ENCODE measurements at regions of chr15 and their contacts with region 1.

Region 1: GRCh38 chr15:67303490-67304363 is 49.1 kb downstream of the IQCH start:
- DNase-seq: no peak
- H3K4me3 Mint-ChIP-seq: no peak overlapping the region
- H3K27ac Mint-ChIP-seq: no peak overlapping the region
- H3K4me1 Mint-ChIP-seq: peaks cover 14% of the 10 kb centered on the region
- H3K27me3 Mint-ChIP-seq: peaks cover 6% of the 10 kb centered on the region

Region 2: GRCh38 chr15:66841953-66842681 is 461.6 kb before region 1 on chr15:
- CTCF ChIA-PET with region 1: no interaction called
- POLR2A ChIA-PET with region 1: no interaction called
- intact Hi-C with region 1: no loop called
- DNase-seq: peak; percentile 31
- H3K4me3 Mint-ChIP-seq: no peak overlapping the region
- H3K27ac Mint-ChIP-seq: no peak overlapping the region
- H3K4me1 Mint-ChIP-seq: peaks cover 2% of the 10 kb centered on the region
- H3K27me3 Mint-ChIP-seq: peaks cover 32% of the 10 kb centered on the region

Region 3: DNA sequence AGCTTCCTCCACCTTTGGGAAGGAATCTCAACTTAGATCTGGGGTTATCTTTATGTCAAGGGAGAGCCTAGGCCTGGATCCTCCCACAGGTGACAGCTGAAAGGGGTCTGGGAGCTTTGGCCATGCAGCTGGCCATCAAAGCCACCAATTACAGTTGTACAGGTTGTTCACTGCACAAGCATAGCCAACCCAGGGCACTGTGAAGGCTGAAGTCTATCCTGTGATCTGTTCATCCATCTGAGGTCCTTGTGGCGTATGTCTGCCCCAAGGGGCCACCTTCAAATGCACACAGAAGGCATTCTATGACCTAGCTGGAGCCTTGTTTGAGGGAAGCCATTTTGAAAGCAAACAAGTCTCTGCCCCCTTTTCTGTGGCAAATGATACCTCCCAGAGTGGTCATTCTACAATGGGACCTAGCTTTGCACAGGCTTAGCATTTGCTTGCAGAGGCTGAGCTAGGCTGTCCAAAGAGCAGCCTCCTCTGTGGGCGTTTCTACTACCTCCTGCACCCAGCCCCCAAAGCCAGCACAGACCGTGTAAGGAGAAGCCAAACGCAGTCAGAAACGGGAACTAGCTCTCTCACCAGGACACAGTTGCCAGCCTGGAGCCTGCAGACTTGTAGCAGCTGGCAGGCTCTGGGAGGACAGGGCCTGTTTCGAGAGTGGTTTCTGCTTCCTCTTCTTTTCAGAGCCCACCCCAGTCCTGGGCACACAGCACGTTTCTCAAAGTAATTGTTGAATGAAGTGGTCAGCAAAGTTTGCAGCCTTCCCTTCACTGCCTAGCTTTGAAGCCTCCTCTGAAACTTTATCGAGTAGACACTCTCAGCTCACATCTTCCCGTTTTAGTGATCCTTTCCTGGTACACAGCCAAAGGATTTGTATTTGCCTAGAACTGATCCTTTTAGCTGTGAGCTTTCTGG is 395.6 kb before region 1 on chr15:
- CTCF ChIA-PET with region 1: interaction called, 11 read pairs
- POLR2A ChIA-PET with region 1: no interaction called
- intact Hi-C with region 1: no loop called
- DNase-seq: no peak
- H3K4me3 Mint-ChIP-seq: no peak overlapping the region
- H3K27ac Mint-ChIP-seq: no peak overlapping the region
- H3K4me1 Mint-ChIP-seq: peaks cover 17% of the 10 kb centered on the region
- H3K27me3 Mint-ChIP-seq: peaks cover 5% of the 10 kb centered on the region

Region 4: GRCh38 chr15:66946578-66947164 is 357.1 kb before region 1 on chr15:
- CTCF ChIA-PET with region 1: interaction called, 56 read pairs
- POLR2A ChIA-PET with region 1: interaction called, 3 read pairs
- intact Hi-C with region 1: loop called (anchors 1 kb)
- DNase-seq: peak; percentile 83
- H3K4me3 Mint-ChIP-seq: no peak overlapping the region
- H3K27ac Mint-ChIP-seq: no peak overlapping the region
- H3K4me1 Mint-ChIP-seq: peaks cover 6% of the 10 kb centered on the region
- H3K27me3 Mint-ChIP-seq: no peaks in the 10 kb centered on the region

Region 5: GRCh38 chr15:67024314-67024997 is 279.3 kb before region 1 on chr15:
- CTCF ChIA-PET with region 1: no interaction called
- POLR2A ChIA-PET with region 1: no interaction called
- intact Hi-C with region 1: loop called (anchors 10 kb)
- DNase-seq: peak; percentile 78
- H3K4me3 Mint-ChIP-seq: no peak overlapping the region
- H3K27ac Mint-ChIP-seq: no peak overlapping the region
- H3K4me1 Mint-ChIP-seq: peaks cover 33% of the 10 kb centered on the region
- H3K27me3 Mint-ChIP-seq: peaks cover 1% of the 10 kb centered on the region

Region 6: DNA sequence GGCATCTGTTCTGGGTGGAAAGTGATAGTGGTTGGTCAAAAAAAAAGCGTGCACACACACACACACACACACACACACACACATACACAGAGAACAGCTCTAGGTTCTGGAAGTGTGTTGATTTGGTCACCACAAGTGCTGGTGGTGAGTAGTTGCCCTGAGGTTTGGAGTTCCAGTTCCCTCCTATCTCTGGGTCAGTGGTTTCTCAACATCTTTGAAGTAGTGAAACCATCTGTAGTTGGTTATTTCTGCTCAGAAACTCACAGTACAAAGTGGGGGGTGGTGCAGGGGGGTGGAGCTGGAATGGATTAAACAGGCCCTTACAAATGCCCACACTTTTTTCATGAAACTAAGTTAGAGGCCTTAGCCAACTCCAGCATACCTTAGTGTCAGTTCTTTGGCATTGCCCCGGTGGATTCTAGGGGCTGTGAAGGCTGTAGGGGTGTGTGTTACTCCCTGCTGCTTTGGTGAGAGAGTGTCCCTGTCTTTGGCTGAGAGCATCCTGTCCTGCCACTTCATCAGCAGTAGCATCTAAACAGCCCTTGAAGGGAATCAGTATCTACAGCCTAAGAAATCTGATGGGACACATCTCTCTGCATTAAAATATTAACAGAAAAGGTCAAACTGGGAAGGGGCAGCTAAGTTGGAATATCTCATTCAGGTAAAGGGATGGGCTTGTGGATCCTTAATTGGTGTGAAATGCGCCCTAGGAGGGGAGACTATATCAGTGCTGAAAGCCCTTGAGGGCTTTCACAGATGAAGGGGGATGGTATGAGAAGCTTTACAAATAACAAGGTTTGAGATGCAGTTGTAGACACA is 217.7 kb before region 1 on chr15:
- CTCF ChIA-PET with region 1: interaction called, 3 read pairs
- POLR2A ChIA-PET with region 1: interaction called, 3 read pairs
- intact Hi-C with region 1: loop called (anchors 1 kb)
- DNase-seq: peak; percentile 70
- H3K4me3 Mint-ChIP-seq: peak overlapping the region; percentile 1
- H3K27ac Mint-ChIP-seq: peak overlapping the region; percentile 82
- H3K4me1 Mint-ChIP-seq: peaks cover 98% of the 10 kb centered on the region
- H3K27me3 Mint-ChIP-seq: no peaks in the 10 kb centered on the region

Region 7: GRCh38 chr15:67254238-67255175 is 49.2 kb before region 1 on chr15 and contains the starts of genes AAGAB and IQCH:
- CTCF ChIA-PET with region 1: interaction called, 4 read pairs
- POLR2A ChIA-PET with region 1: no interaction called
- intact Hi-C with region 1: loop called (anchors 1 kb)
- DNase-seq: peak; percentile 99
- H3K4me3 Mint-ChIP-seq: peak within 1 kb of the TSS; percentile 99
- H3K27ac Mint-ChIP-seq: peak within 1 kb of the TSS; percentile 97
- H3K4me1 Mint-ChIP-seq: peaks cover 40% of the 10 kb centered on the region
- H3K27me3 Mint-ChIP-seq: no peaks in the 10 kb centered on the region
- total RNA-seq, gene AAGAB: 52.3 to 57.0 TPM
- total RNA-seq, gene IQCH: 1.6 to 2.8 TPM

Region 8: GRCh38 chr15:67280217-67280616 is 23.5 kb before region 1 on chr15:
- CTCF ChIA-PET with region 1: no interaction called
- POLR2A ChIA-PET with region 1: no interaction called
- intact Hi-C with region 1: no loop called
- DNase-seq: no peak
- H3K4me3 Mint-ChIP-seq: no peak overlapping the region
- H3K27ac Mint-ChIP-seq: no peak overlapping the region
- H3K4me1 Mint-ChIP-seq: no peaks in the 10 kb centered on the region
- H3K27me3 Mint-ChIP-seq: no peaks in the 10 kb centered on the region

Region 9: GRCh38 chr15:67839929-67840748 is 536.4 kb after region 1 on chr15 and contains the start of gene RNU6-1:
- CTCF ChIA-PET with region 1: no interaction called
- POLR2A ChIA-PET with region 1: no interaction called
- intact Hi-C with region 1: loop called (anchors 5 kb)
- DNase-seq: peak; percentile 96
- H3K4me3 Mint-ChIP-seq: peak within 1 kb of the TSS; percentile 88
- H3K27ac Mint-ChIP-seq: peak within 1 kb of the TSS; percentile 95
- H3K4me1 Mint-ChIP-seq: peaks cover 37% of the 10 kb centered on the region
- H3K27me3 Mint-ChIP-seq: peaks cover 18% of the 10 kb centered on the region
- total RNA-seq, gene RNU6-1: not detected

Measured in activated CD4-positive, alpha-beta memory T cell treated with anti-CD3 and anti-CD28 coated beads for 36 hours (primary cell).